Naive thymus-derived CD4-positive, alpha-beta T cell (primary cell): ENCODE measurements at regions of chr7 and their contacts with region 1.

Region 1: DNA sequence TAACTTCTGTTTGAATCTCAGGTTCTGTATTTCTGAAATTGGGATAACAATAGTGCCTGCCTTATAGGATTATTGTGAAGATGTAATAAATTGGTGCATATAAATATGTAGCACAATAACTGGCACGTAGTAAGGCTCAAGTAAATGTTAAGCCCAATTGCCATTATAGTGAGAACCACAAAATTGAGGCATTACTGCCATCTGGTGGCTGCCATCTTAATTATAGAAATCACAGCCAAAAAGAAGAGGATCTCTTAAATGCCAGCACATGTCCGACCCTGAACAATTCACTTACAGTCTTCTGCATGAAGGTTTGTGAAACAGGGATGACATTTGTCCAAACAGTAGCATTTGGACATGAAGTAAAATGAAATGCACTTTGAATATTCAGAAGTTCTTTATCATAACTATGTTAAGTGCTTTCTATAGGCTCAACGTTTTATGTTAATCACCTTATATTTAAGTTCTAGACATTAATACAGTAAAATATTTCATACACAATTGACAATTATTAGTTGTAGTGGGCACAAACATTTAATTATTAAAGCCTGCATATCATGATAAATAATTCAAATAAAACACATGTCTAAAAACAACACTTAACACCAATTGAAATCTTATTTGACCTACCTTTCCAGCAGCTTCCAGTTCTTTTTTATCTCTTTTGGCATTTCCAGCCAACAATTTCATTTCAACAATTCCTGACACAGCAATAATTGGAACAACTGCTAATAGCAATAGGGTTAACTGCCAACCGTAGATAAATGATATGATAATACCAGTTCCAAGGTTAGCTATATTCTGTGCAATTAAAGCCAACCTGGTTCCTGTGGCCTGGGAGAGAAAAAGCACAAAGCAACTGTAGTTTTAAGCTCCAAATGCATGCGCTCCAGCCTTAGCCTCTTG is 58.5 kb downstream of the ABCB4 start:
- DNase-seq: peak in 8 of 9 donors; percentile 43 to 73 (median 63)
- ATAC-seq: peak; percentile 82
- H3K4me3 ChIP-seq: no peak overlapping the region
- H3K4me3 Mint-ChIP-seq: no peak overlapping the region
- H3K27ac ChIP-seq: no peak overlapping the region
- H3K27ac Mint-ChIP-seq: no peak overlapping the region
- H3K4me1 ChIP-seq: no peaks in the 10 kb centered on the region
- H3K4me1 Mint-ChIP-seq: no peaks in the 10 kb centered on the region
- H3K27me3 ChIP-seq: no peaks in the 10 kb centered on the region
- H3K27me3 Mint-ChIP-seq: peaks cover 0 to 7% (median 0%) of the 10 kb centered on the region in 5 donors

Region 2: DNA sequence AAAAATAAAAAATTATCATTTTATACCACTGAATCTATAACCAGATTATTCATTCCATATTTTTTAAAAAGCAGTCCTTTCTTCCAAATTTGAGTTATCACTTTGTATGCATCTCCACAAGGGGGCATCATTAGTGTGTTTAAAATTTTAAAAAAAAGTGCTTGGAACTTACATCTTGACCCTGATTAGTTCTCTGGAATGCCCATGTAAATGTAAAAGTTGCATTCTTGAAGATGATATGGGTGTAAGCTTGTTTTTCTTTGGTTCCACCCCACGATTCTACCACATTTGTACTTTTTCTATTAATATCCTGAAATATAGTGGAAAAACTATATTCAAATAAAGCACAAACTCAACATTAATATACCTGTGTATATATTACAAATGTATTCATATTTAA is 502.4 kb before region 1 on chr7:
- CTCF ChIA-PET with region 1: no interaction called
- POLR2A ChIA-PET with region 1: no interaction called
- intact Hi-C with region 1: loop called in 1 of 2 experiments (anchors 1 kb)
- DNase-seq: peak in 2 of 9 donors; percentile 5 to 25
- ATAC-seq: no peak
- H3K4me3 ChIP-seq: no peak overlapping the region
- H3K4me3 Mint-ChIP-seq: no peak overlapping the region
- H3K27ac ChIP-seq: no peak overlapping the region
- H3K27ac Mint-ChIP-seq: no peak overlapping the region
- H3K4me1 ChIP-seq: no peaks in the 10 kb centered on the region
- H3K4me1 Mint-ChIP-seq: peaks cover 0 to 2% (median 0%) of the 10 kb centered on the region in 7 donors
- H3K27me3 ChIP-seq: no peaks in the 10 kb centered on the region
- H3K27me3 Mint-ChIP-seq: peaks cover 0 to 7% (median 0%) of the 10 kb centered on the region in 5 donors

Region 3: DNA sequence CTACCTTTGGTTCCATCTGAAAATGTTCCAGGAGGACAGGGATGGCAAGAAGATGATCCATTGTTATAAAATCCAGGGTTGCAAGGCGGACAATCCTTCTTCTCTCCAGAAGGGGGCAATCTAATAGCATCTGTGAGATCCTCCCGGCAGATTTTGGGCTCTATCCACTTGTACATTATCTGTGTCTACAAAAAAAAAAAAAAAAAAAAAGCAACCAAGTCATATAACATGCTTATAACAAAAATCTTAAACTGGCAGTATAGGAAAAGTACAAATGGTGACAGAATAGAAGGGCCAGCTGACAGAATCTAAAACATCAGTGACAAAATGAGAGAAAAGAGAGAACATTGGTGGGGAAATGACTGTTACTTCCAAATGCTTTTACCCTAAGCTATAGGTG is 490.2 kb before region 1 on chr7:
- CTCF ChIA-PET with region 1: interaction called, 8 read pairs
- POLR2A ChIA-PET with region 1: no interaction called
- intact Hi-C with region 1: loop called (anchors 1 to 5 kb)
- DNase-seq: peak in 7 of 9 donors; percentile 25 to 56 (median 38)
- ATAC-seq: peak; percentile 84
- H3K4me3 ChIP-seq: no peak overlapping the region
- H3K4me3 Mint-ChIP-seq: no peak overlapping the region
- H3K27ac ChIP-seq: no peak overlapping the region
- H3K27ac Mint-ChIP-seq: peak overlapping the region in 2 of 9 donors; percentile 28 to 53
- H3K4me1 ChIP-seq: no peaks in the 10 kb centered on the region
- H3K4me1 Mint-ChIP-seq: no peaks in the 10 kb centered on the region
- H3K27me3 ChIP-seq: no peaks in the 10 kb centered on the region
- H3K27me3 Mint-ChIP-seq: peaks cover 0 to 16% (median 4%) of the 10 kb centered on the region in 5 donors

Region 4: GRCh38 chr7:87312215-87312865 is 104.6 kb before region 1 on chr7:
- CTCF ChIA-PET with region 1: interaction called, 16 read pairs
- POLR2A ChIA-PET with region 1: no interaction called
- intact Hi-C with region 1: loop called (anchors 1 kb)
- DNase-seq: peak; percentile 25 to 70 (median 55)
- ATAC-seq: peak; percentile 98
- H3K4me3 ChIP-seq: no peak overlapping the region
- H3K4me3 Mint-ChIP-seq: no peak overlapping the region
- H3K27ac ChIP-seq: no peak overlapping the region
- H3K27ac Mint-ChIP-seq: no peak overlapping the region
- H3K4me1 ChIP-seq: peaks cover 0 to 4% of the 10 kb centered on the region in 2 donors
- H3K4me1 Mint-ChIP-seq: peaks cover 0 to 3% (median 0%) of the 10 kb centered on the region in 7 donors
- H3K27me3 ChIP-seq: no peaks in the 10 kb centered on the region
- H3K27me3 Mint-ChIP-seq: peaks cover 0 to 12% (median 0%) of the 10 kb centered on the region in 5 donors